Heart right ventricle (tissue), 16 donors: ENCODE measurements at regions of chr1 and their contacts with region 1.

Region 1: DNA sequence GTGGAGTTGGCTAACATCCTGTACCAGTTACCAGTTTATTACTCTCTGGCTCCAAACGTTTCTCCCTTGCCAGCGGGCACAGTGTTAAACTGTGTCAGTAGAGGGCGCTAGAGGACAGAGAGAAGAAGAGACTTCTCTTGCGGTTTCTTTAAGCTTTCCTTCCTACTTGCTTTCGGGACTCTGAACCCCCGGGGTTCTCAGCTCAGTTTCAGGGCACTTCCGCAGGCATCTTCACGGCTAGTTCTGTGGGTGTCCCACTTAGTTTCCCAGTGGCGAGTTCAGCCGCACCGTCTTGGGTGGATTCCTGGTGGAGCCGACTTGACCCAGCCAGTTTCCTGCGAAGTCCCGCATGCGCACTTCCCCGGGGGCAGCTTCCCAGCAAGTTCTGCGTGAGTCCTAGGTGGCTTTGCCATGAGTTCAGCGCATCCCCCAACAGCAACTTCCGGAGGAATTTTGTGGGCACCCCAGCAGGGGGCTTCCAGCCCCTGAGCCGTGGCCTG is 37.9 kb upstream of the BTG2 start:
- DNase-seq: peak; percentile 83 to 87
- ATAC-seq: peak; percentile 60 to 83 (median 74)
- H3K4me3 ChIP-seq: peak overlapping the region in 9 of 10 donors; percentile 37 to 65 (median 59)
- H3K27ac ChIP-seq: peak overlapping the region; percentile 28 to 92 (median 82)
- H3K4me1 ChIP-seq: peaks cover 3 to 25% (median 15%) of the 10 kb centered on the region in 9 donors
- H3K27me3 ChIP-seq: no peaks in the 10 kb centered on the region
- CTCF ChIP-seq: peak; percentile 85 to 99 (median 95)

Region 2: DNA sequence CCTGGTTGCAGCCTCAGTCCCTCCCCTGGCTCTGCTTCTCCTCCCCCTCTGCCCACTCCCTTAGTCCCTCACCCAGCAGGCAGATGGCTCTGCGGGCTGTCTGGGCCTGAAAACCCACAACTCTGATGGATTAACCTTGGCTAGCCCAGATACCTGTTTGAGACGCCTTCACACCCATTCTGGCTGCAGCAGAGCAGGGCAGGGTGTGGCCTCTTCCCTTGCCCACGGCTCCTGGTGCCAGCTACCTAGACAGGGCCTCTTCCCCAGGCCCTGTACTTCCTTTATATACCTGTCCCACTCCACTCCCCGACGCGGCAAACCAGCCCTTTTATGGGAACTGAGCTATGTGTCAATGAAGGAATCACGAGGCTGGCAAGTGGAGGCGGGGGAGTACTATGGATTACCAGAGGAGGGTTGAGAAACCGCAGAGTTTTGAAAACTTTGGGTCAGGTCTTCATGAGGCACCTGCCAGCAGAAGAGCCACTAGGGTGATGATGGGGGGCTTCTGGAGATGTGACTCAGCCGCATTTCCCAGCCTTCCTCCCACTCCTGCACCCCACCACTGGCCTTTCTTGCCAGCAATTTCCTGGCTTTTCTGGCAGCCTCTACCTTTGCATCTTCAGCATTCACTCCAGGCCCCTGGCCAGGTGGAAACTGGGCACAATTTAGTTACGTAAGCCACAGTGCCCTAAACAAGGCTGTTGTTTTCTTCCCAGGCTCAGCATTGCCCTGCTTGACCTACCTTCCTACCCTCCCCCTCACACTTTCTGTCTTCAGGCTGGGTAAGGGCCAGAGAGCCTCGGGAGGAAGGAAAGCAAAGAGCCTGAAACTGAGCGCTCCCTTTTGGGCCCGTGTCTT is 80.7 kb before region 1 on chr1 and contains the start of gene CHI3L1:
- intact Hi-C with region 1: no loop called
- DNase-seq: no peak
- ATAC-seq: peak in 2 of 8 donors; percentile 11 to 15
- H3K4me3 ChIP-seq: no peak within 1 kb of the TSS
- H3K27ac ChIP-seq: peak within 1 kb of the TSS in 1 of 10 donors; percentile 16
- H3K4me1 ChIP-seq: peaks cover 0 to 19% (median 4%) of the 10 kb centered on the region in 9 donors
- H3K27me3 ChIP-seq: peaks cover 0 to 4% (median 0%) of the 10 kb centered on the region in 7 donors
- CTCF ChIP-seq: no peak
- total RNA-seq, gene CHI3L1: 0.15 to 11.0 (median 0.42) TPM in 9 of 10 donors, not detected in the other

Region 3: GRCh38 chr1:203480525-203481084 is 213.2 kb after region 1 on chr1:
- intact Hi-C with region 1: loop called in 8 of 10 experiments (anchors 5 to 10 kb)
- DNase-seq: peak; percentile 29 to 69
- ATAC-seq: peak; percentile 26 to 72 (median 49)
- H3K4me3 ChIP-seq: peak overlapping the region in 7 of 10 donors; percentile 10 to 60 (median 22)
- H3K27ac ChIP-seq: peak overlapping the region in 9 of 10 donors; percentile 55 to 74 (median 64)
- H3K4me1 ChIP-seq: peaks cover 7 to 51% (median 22%) of the 10 kb centered on the region in 9 donors
- H3K27me3 ChIP-seq: no peaks in the 10 kb centered on the region
- CTCF ChIP-seq: no peak